A549 (cell line): ENCODE measurements at regions of chr7 and their contacts with region 1.

Region 1: GRCh38 chr7:116236020-116236630 is 25.8 kb downstream of the TES start:
- DNase-seq: peak; percentile 31 to 60
- ATAC-seq: peak; percentile 60 to 77; a peak in 4 of 6 replicates
- H3K4me3 ChIP-seq: no peak overlapping the region
- H3K27ac ChIP-seq: no peak overlapping the region
- H3K4me1 ChIP-seq: peaks cover 36% of the 10 kb centered on the region
- CTCF ChIP-seq: peak; percentile 89
- EP300 ChIP-seq: no peak
- POLR2A ChIP-seq: no peak
- RAD21 ChIP-seq: peak; percentile 87 to 89

Region 2: GRCh38 chr7:116138202-116138801 is 97.8 kb before region 1 on chr7:
- CTCF ChIA-PET with region 1: interaction called, 10 read pairs
- POLR2A ChIA-PET with region 1: no interaction called
- DNase-seq: peak; percentile 46 to 72
- ATAC-seq: peak; percentile 94 to 99
- H3K4me3 ChIP-seq: no peak overlapping the region
- H3K27ac ChIP-seq: no peak overlapping the region
- H3K4me1 ChIP-seq: peaks cover 5% of the 10 kb centered on the region; the same call in 1 of the 3 replicates
- CTCF ChIP-seq: peak; percentile 93
- EP300 ChIP-seq: no peak
- POLR2A ChIP-seq: no peak
- RAD21 ChIP-seq: peak; percentile 88 to 90

Region 3: GRCh38 chr7:116173051-116174028 is 62.8 kb before region 1 on chr7:
- CTCF ChIA-PET with region 1: interaction called, 385 read pairs
- POLR2A ChIA-PET with region 1: interaction called, 3 read pairs
- DNase-seq: peak; percentile 21 to 73
- ATAC-seq: peak; percentile 16 to 50; a peak in 3 of 6 replicates
- H3K4me3 ChIP-seq: no peak overlapping the region
- H3K27ac ChIP-seq: peak overlapping the region in 1 of 2 experiments; percentile 36; a peak in 1 of 6 replicates
- H3K4me1 ChIP-seq: peaks cover 56% of the 10 kb centered on the region
- CTCF ChIP-seq: peak; percentile 86
- EP300 ChIP-seq: no peak
- POLR2A ChIP-seq: no peak
- RAD21 ChIP-seq: peak; percentile 92

Region 4: GRCh38 chr7:116197360-116197759 is 38.8 kb before region 1 on chr7:
- CTCF ChIA-PET with region 1: interaction called, 17 read pairs
- POLR2A ChIA-PET with region 1: no interaction called
- DNase-seq: no peak
- ATAC-seq: no peak
- H3K4me3 ChIP-seq: no peak overlapping the region
- H3K27ac ChIP-seq: no peak overlapping the region
- H3K4me1 ChIP-seq: peaks cover 10% of the 10 kb centered on the region; the same call in 2 of the 3 replicates
- CTCF ChIP-seq: no peak
- EP300 ChIP-seq: no peak
- POLR2A ChIP-seq: no peak
- RAD21 ChIP-seq: no peak

Region 5: GRCh38 chr7:116219288-116219687 is 16.8 kb before region 1 on chr7:
- CTCF ChIA-PET with region 1: interaction called, 11 read pairs
- POLR2A ChIA-PET with region 1: no interaction called
- DNase-seq: no peak
- ATAC-seq: no peak
- H3K4me3 ChIP-seq: no peak overlapping the region
- H3K27ac ChIP-seq: peak overlapping the region in 1 of 2 experiments; percentile 40; a peak in 3 of 6 replicates
- H3K4me1 ChIP-seq: peaks cover 66% of the 10 kb centered on the region
- CTCF ChIP-seq: no peak
- EP300 ChIP-seq: no peak
- POLR2A ChIP-seq: no peak
- RAD21 ChIP-seq: no peak